ENCODE measurements at regions of chr4 and their contacts with region 1.

Region 1: DNA sequence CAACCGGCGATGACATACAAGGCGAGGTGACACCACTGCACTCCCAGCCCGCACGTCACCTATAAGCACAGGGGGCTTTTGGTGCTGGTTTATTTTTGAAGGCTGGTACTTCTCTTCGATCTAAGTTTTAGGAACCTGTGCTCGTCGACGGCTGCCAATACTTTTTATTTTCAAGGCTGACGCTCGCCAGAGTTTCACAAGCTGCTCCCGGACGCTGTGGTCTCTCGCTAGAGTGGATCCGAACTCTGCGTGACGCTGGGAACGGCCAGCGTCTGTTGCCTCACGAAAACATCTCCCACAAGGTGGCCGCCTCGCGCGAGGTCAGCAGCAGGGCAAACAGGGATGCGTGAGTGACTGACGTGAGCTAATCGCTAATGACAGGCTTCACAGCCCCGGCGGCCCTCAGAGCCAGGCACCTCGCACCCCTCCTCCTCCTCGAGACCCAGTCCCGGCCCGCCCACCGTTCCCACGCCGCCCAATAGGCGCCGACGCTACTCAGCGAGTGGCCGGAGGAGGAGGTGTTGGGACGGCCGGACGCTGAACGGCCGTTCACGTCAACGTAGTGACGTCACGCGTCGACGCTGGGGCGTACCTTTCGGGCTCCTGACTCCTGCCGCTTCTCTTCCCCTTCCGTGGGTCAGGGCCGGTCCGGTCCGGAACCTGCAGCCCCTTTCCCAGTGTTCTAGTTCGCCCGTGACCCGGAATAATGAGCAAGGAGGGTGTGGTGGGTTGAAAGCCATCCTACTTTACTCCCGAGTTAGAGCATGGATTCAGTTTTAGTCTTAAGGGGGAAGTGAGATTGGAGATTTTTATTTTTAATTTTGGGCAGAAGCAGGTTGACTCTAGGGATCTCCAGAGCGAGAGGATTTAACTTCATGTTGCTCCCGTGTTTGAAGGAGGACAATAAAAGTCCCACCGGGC is at the start of gene CLCN3:
- DNase-seq: peak; percentile 97 to 99 (median 98)
- H3K4me3 ChIP-seq: peak within 1 kb of the TSS; percentile 85
- H3K27ac ChIP-seq: peak within 1 kb of the TSS; percentile 76 to 87
- H3K4me1 ChIP-seq: peaks cover 2% of the 10 kb centered on the region
- H3K27me3 ChIP-seq: no peaks in the 10 kb centered on the region
- CTCF ChIP-seq: peak in 2 of 3 donors; percentile 63 to 67
- EP300 ChIP-seq: no peak
- POLR2A ChIP-seq: peak; percentile 98
- total RNA-seq, gene CLCN3: 18.8 to 38.5 (median 29.6) TPM

Region 2: GRCh38 chr4:169659716-169660670 is 39.8 kb after region 1 on chr4:
- intact Hi-C with region 1: loop called in 1 of 4 experiments (anchors 5 kb)
- DNase-seq: peak; percentile 52 to 84 (median 59)
- H3K4me3 ChIP-seq: peak overlapping the region; percentile 39
- H3K27ac ChIP-seq: peak overlapping the region; percentile 33 to 70
- H3K4me1 ChIP-seq: no peaks in the 10 kb centered on the region
- H3K27me3 ChIP-seq: no peaks in the 10 kb centered on the region
- CTCF ChIP-seq: no peak
- EP300 ChIP-seq: no peak
- POLR2A ChIP-seq: no peak

Measured in ovary (tissue), 10 donors.